ENCODE measurements at regions of chr2 and their contacts with region 1.

Region 1: DNA sequence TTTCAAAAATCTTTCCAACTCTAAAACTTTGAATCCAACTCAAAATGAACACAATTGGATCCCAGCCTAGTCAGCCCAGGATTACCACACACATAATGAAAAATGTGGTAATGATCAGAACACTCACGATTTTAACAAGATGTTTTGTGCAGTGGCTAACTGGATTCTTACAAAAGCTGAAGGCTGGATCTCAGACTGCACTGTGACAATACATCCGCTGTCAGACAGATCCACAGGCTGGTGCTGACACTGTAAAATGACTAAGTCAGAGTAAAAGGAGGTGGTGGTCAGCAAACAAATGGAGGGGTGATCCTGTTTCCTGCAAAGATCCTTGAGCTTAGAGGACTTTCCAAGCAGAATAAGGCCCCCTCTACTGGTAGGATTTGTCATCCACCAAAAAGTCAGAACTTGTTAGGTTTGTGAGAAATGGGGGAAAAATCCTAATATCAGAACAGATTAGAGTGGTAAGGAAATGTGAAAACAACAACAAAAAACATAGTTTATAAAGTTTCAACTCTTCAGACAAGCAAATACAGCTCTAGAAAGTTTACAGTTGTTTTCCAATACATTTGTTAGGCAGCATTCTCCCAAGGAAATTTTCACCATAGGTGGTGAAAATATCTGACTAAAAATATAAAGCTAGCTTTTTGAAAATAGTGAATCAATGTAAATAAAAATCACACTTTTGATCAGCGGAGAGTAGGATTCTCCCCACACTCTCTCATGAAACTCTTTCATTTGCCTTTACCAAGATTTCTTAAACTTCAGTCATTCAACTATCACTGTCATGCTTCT is 211.9 kb downstream of the AGPS start:
- DNase-seq: peak; percentile 53
- ATAC-seq: peak; percentile 82
- H3K4me3 ChIP-seq: no peak overlapping the region
- H3K27ac ChIP-seq: no peak overlapping the region
- H3K4me1 ChIP-seq: no peaks in the 10 kb centered on the region
- H3K27me3 ChIP-seq: no peaks in the 10 kb centered on the region
- CTCF ChIP-seq: peak; percentile 70 to 85 (median 77); a peak in 5 of 6 replicates
- POLR2A ChIP-seq: no peak
- RAD21 ChIP-seq: peak; percentile 64

Region 2: DNA sequence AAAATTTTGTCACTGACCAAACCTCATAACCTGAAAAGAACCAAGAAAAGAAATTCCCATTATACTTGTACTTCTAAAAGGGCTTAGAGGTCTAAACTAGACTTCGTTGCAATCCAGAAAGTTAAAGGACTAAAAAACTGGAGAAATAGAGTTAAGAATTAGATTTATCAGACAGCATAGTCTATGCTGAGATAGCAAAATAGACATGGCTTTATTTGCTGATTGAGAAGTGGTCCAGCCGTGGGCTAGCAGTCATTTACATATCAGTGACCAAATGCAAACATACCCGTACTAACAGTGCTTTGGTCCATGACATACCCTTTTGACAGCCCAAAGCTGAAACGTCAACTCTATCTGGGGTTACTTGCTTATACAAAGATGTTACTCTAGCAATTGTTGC is 11.6 kb after region 1 on chr2:
- CTCF ChIA-PET with region 1: interaction called, 12 read pairs
- POLR2A ChIA-PET with region 1: no interaction called
- RAD21 ChIA-PET with region 1: no interaction called
- intact Hi-C with region 1: no loop called
- DNase-seq: no peak
- ATAC-seq: no peak
- H3K4me3 ChIP-seq: no peak overlapping the region
- H3K27ac ChIP-seq: no peak overlapping the region
- H3K4me1 ChIP-seq: peaks cover 0 to 10% of the 10 kb centered on the region in 2 experiments; a peak in 1 of 4 replicates
- H3K27me3 ChIP-seq: no peaks in the 10 kb centered on the region
- CTCF ChIP-seq: no peak
- POLR2A ChIP-seq: no peak
- RAD21 ChIP-seq: no peak